ENCODE measurements at regions of chr2 and their contacts with region 1.

Region 1: GRCh38 chr2:238060542-238061314 is at the start of gene SCLY:
- DNase-seq: peak; percentile 97
- H3K4me3 ChIP-seq: peak within 1 kb of the TSS; percentile 79
- H3K27ac ChIP-seq: peak within 1 kb of the TSS; percentile 34
- H3K4me1 ChIP-seq: peaks cover 30% of the 10 kb centered on the region
- CTCF ChIP-seq: no peak
- total RNA-seq, gene SCLY: 39.3 and 41.7 TPM in 2 replicates

Region 2: GRCh38 chr2:237691908-237692600 is 368.7 kb before region 1 on chr2:
- CTCF ChIA-PET with region 1: no interaction called
- POLR2A ChIA-PET with region 1: no interaction called
- intact Hi-C with region 1: loop called (anchors 5 kb)
- DNase-seq: peak; percentile 92
- H3K4me3 ChIP-seq: peak overlapping the region; percentile 91
- H3K27ac ChIP-seq: peak overlapping the region; percentile 99
- H3K4me1 ChIP-seq: peaks cover 49% of the 10 kb centered on the region
- CTCF ChIP-seq: no peak

Region 3: DNA sequence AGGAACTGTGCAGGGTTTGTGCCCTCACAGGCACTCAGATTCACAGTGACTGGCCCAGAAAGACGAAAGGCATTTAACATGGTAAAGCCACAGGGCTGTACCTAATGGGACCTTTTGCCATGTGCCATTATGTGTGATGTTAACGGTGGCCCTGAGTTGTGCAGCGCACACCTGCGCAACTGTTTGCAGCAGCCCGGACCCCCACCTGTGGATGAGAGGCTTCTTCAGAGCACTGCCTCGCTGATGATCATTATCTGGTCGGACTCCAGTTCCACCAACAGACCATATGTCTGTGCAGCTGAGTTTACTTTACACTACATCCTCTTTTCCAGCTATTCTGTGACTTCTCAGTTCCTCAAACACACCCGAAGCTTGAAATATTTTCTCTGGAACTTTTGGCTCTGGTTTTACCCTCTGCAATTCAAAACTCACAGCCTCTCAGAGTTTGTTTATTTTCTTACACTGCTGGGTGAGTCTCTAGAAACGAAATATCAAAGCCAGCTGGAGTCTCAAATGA is 129.5 kb before region 1 on chr2:
- CTCF ChIA-PET with region 1: no interaction called
- POLR2A ChIA-PET with region 1: no interaction called
- intact Hi-C with region 1: no loop called
- DNase-seq: no peak
- H3K4me3 ChIP-seq: no peak overlapping the region
- H3K27ac ChIP-seq: no peak overlapping the region
- H3K4me1 ChIP-seq: no peaks in the 10 kb centered on the region
- CTCF ChIP-seq: no peak

Region 4: DNA sequence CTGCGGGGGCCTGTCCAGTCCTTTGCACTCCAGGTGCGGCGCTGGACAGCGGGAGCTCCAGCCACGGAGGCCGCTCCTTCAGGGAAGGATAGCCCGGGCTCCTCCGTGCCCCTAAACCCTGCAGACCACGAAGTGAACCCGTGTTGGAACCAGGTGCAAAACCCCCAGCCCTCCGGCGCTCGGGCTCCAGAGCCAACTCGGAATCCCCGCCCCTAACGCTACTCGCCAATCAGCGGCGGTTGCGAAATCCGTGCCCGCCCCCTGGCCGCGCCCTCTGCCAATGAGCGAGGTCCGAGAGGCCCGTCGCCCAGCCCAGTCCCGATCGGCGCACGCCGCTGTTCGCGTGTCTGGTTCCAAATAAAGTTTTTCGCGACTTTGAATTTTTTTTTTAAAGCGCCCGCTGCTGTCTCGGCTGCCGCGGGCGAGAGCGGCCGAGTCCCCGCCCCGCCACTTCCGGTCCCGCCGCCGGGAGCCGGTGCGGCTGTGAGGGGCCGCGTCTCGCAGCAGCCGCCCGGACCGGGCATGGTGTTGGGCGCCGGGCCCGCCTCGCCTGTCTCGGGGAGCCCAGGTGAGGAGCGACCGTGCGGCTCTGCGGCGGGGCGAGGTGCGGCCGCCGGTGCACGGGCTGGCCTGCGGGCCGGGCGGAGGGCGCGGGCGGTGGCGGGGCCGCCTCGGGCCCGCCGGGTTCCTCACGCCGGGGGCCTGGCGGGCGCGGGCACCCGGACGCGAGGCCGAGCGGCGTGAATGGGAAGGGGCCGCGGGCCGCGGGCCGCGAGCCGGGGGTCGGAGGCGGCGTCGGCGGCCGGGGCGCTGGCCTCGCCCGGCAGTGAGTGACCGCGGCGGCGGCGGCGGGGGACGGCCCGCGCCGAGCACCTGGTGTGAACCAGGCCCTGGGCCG is 93.9 kb before region 1 on chr2 and contains the start of gene UBE2F:
- CTCF ChIA-PET with region 1: no interaction called
- POLR2A ChIA-PET with region 1: interaction called, 3 read pairs
- intact Hi-C with region 1: loop called (anchors 5 kb)
- DNase-seq: peak; percentile 98
- H3K4me3 ChIP-seq: peak within 1 kb of the TSS; percentile 83
- H3K27ac ChIP-seq: no peak within 1 kb of the TSS
- H3K4me1 ChIP-seq: peaks cover 25% of the 10 kb centered on the region
- CTCF ChIP-seq: no peak
- total RNA-seq, gene UBE2F: 18.1 and 19.9 TPM in 2 replicates

Region 5: GRCh38 chr2:238015705-238016104 is 45.0 kb before region 1 on chr2:
- CTCF ChIA-PET with region 1: no interaction called
- POLR2A ChIA-PET with region 1: no interaction called
- intact Hi-C with region 1: no loop called
- DNase-seq: peak; percentile 13
- H3K4me3 ChIP-seq: no peak overlapping the region
- H3K27ac ChIP-seq: no peak overlapping the region
- H3K4me1 ChIP-seq: no peaks in the 10 kb centered on the region
- CTCF ChIP-seq: peak; percentile 65